Thyroid gland (tissue), 4 donors: ENCODE measurements at regions of chr2 and their contacts with region 1.

Region 1: DNA sequence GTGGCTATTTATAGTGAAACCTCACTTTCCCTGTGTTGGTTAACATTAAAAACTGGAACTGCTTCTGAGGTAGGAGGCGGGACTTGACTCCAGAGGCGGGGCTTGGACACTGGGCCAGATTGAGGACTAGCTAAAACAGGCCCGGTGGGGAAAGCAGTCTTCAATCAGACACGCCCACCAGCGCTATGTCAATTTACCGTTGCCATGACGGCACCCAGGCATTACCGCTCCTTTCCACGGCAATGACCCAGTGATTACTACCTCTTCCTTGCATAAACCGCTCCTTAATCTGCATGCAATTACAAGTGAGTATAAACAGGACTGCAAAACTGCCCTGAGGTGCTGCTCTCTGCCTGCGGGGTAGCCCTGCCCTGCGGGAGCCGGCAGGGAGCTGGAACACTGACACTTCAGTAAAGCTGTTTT is 35.3 kb downstream of the LRRFIP1 start:
- DNase-seq: peak; percentile 95 to 97
- H3K4me3 ChIP-seq: no peak overlapping the region
- H3K27ac ChIP-seq: peak overlapping the region; percentile 24 to 55 (median 53)
- H3K4me1 ChIP-seq: peaks cover 18 to 31% of the 10 kb centered on the region in 2 donors
- H3K27me3 ChIP-seq: no peaks in the 10 kb centered on the region
- CTCF ChIP-seq: peak in 1 of 6 experiments; percentile 3
- POLR2A ChIP-seq: no peak

Region 2: GRCh38 chr2:237581751-237582746 is 80.6 kb before region 1 on chr2:
- intact Hi-C with region 1: loop called (anchors 10 kb)
- DNase-seq: peak; percentile 93 to 94
- H3K4me3 ChIP-seq: no peak overlapping the region
- H3K27ac ChIP-seq: peak overlapping the region; percentile 87 to 97 (median 89)
- H3K4me1 ChIP-seq: peaks cover 25 to 27% of the 10 kb centered on the region in 2 donors
- H3K27me3 ChIP-seq: no peaks in the 10 kb centered on the region
- CTCF ChIP-seq: peak in 5 of 6 experiments; percentile 21 to 80 (median 55)
- POLR2A ChIP-seq: peak; percentile 45 to 63